MCF 10A (cell line): ENCODE measurements at regions of chr20 and their contacts with region 1.

Region 1: DNA sequence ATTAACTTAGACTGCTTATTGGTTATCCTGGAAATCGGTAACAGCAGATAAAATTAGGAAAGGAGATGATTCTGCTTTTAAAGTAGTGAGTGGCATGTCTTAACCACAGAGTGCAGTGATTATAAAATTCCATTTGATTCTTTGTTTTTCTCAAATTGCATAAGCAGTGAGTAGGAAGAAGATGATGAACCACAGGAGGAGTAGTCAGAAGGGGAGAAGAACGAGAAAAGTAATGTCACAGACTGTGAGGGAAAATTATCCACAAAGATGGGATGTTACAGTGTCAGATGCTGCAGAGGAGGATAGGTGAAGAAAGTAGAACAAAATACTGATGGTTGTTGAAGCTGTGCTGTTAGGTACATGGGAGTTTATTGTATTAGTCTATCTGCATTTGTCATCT is 63.0 kb downstream of the ITCH start:
- DNase-seq: no peak
- H3K4me3 Mint-ChIP-seq: no peak overlapping the region
- H3K27ac Mint-ChIP-seq: peak overlapping the region; percentile 13
- H3K4me1 Mint-ChIP-seq: no peaks in the 10 kb centered on the region
- H3K27me3 Mint-ChIP-seq: no peaks in the 10 kb centered on the region
- CTCF ChIP-seq: no peak

Region 2: GRCh38 chr20:34437330-34437986 is 11.4 kb after region 1 on chr20:
- CTCF ChIA-PET with region 1: interaction called, 10 read pairs
- POLR2A ChIA-PET with region 1: interaction called, 5 read pairs
- intact Hi-C with region 1: no loop called
- DNase-seq: no peak
- H3K4me3 Mint-ChIP-seq: no peak overlapping the region
- H3K27ac Mint-ChIP-seq: no peak overlapping the region
- H3K4me1 Mint-ChIP-seq: peaks cover 5% of the 10 kb centered on the region
- H3K27me3 Mint-ChIP-seq: no peaks in the 10 kb centered on the region
- CTCF ChIP-seq: no peak

Region 3: GRCh38 chr20:34724172-34724571 is 298.1 kb after region 1 on chr20:
- CTCF ChIA-PET with region 1: no interaction called
- POLR2A ChIA-PET with region 1: no interaction called
- intact Hi-C with region 1: no loop called
- DNase-seq: no peak
- H3K4me3 Mint-ChIP-seq: no peak overlapping the region
- H3K27ac Mint-ChIP-seq: no peak overlapping the region
- H3K4me1 Mint-ChIP-seq: no peaks in the 10 kb centered on the region
- H3K27me3 Mint-ChIP-seq: no peaks in the 10 kb centered on the region
- CTCF ChIP-seq: no peak